HepG2 (cell line): ENCODE measurements at regions of chr7 and their contacts with region 1.

Region 1: DNA sequence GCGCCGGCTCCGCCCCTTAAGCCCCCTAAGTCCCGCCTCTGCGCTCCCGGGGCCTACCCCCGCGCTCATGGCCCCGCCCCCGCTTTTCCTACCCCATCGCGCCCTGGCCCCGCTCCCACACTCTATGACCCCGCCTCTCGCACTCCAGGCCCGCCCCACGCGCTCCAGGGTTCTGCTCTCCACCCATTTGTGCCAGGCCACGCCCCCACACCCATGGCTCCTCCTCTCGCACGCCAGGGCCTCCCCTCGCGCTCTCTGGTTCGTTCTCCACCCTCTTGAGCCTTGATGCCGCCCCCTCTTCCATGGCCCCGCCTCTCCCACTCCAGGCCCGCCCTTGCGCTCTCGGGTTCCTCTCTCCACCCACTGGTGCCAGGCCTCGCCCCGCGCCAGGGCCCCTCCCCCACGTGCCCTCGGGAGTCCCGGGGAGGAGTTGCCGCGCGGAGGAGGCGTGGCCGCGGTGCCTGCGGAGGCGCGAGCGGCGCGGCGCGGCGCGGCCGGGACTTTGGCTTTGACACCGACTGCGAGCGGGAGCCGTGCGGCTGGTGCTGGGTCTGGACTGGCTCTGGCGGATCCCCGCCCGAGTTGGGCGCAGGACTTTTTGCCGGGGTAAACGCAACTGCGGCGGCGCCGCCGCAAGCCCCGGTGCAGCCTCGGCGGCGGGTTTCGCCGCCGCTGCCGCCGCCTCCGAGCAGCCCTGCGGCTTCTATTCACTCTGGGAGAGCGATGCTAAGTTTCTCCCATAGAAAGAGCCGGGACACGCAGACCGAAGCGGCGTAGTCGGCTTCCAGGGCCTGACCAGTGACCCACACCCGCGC is at the start of gene EEPD1:
- DNase-seq: peak; percentile 96
- ATAC-seq: peak; percentile 86
- H3K4me3 ChIP-seq: peak within 1 kb of the TSS; percentile 82 to 91 (median 89)
- H3K27ac ChIP-seq: peak within 1 kb of the TSS; percentile 82
- H3K4me1 ChIP-seq: peaks cover 67% of the 10 kb centered on the region
- H3K27me3 ChIP-seq: 0 out of 5 replicates have a peak, but pooled peaks cover 0 to 2% of the 10 kb centered on the region in 2 experiments
- CTCF ChIP-seq: no peak
- EP300 ChIP-seq: peak in 1 of 2 experiments; percentile 21; a peak in 1 of 4 replicates
- POLR2A ChIP-seq: peak; percentile 78 to 93
- RAD21 ChIP-seq: peak; percentile 65
- total RNA-seq, gene EEPD1: 10.0 and 10.1 TPM in 2 replicates

Region 2: GRCh38 chr7:35985126-35985754 is 167.7 kb before region 1 on chr7:
- CTCF ChIA-PET with region 1: no interaction called
- POLR2A ChIA-PET with region 1: no interaction called
- in situ Hi-C with region 1: loop called (anchors 5 kb)
- intact Hi-C with region 1: no loop called
- DNase-seq: peak; percentile 52
- ATAC-seq: peak; percentile 99
- H3K4me3 ChIP-seq: no peak overlapping the region
- H3K27ac ChIP-seq: no peak overlapping the region
- H3K4me1 ChIP-seq: peaks cover 14% of the 10 kb centered on the region; the same call in 1 of the 2 replicates
- H3K27me3 ChIP-seq: peaks cover 0 to 10% of the 10 kb centered on the region in 2 experiments; a peak in 2 of 5 replicates
- CTCF ChIP-seq: peak; percentile 95
- EP300 ChIP-seq: no peak
- POLR2A ChIP-seq: no peak
- RAD21 ChIP-seq: peak; percentile 95

Region 3: DNA sequence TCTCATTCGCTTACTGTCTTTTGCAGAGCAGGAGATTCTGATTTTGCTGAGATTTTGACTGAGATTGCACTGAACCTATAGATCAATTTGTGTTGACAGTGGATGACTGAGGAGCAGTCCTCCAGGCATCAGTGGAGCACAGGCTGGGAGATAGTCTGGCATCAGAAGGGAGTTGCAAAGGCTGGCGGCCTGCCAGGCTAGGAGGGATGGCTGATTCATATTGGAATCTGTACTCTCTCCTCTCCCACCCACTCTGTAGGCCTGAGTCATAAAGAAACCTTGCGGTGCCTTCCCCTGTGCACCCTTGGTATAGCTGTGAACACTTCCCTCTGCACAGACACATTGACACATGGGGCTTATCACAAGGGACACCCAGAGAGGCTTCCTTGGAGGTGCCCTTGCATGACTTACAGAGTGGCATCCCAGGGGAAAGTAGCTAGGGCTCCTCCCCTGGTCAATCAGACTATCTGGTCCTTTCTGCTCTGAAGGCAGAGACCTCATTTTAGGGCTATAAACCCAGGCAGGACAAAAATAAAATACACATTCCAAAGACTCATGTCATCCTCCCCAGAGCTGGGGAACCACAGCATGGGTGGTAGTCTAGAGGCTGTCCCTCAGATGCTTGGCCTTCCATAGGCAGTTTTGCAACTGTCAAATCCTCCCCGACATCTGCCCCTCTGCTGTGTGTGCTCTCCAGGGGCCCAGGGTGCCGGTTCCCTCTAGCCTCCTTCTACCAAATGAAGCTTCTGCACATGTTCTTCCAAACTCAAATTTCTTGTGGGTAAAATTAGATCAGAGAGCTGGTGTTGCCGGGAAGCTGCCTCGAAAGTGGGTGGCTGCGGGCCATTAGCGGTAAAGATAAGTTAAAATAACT is 37.3 kb before region 1 on chr7:
- CTCF ChIA-PET with region 1: no interaction called
- POLR2A ChIA-PET with region 1: interaction called, 3 read pairs
- in situ Hi-C with region 1: no loop called
- intact Hi-C with region 1: loop called (anchors 5 kb)
- DNase-seq: peak; percentile 82
- ATAC-seq: peak; percentile 86
- H3K4me3 ChIP-seq: no peak overlapping the region
- H3K27ac ChIP-seq: no peak overlapping the region
- H3K4me1 ChIP-seq: peaks cover 57% of the 10 kb centered on the region
- H3K27me3 ChIP-seq: no peaks in the 10 kb centered on the region
- CTCF ChIP-seq: no peak
- EP300 ChIP-seq: no peak
- POLR2A ChIP-seq: no peak
- RAD21 ChIP-seq: no peak

Region 4: DNA sequence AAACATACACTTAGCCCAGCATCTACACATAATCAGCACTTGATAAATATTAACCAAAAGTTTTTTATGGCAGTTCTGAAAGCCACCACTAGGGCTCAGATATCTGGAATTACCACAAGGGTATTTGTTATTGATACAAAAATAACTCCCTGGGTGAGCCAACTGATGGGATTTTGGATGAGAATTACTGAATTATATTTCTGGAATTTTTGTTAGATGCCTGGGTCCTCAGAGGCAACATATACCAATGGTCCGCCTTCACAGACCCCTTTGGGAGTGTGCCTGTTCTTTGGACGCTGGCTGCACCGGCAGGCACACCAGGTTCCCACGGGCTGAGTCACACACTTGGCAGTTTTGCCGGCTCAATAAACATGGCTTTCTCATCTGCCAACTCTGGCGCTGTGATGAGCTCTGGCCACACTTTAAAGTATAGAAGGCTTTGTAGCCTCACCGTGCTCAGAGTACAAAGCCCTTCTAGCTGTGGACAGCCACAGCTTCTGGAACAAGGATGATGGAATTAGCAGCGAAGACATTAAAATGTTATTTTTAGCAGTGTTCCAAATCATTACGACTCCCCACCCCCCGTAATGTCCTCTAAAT is 24.4 kb before region 1 on chr7:
- CTCF ChIA-PET with region 1: no interaction called
- POLR2A ChIA-PET with region 1: interaction called, 3 read pairs
- in situ Hi-C with region 1: no loop called
- intact Hi-C with region 1: loop called (anchors 2 kb)
- DNase-seq: peak; percentile 76
- ATAC-seq: peak; percentile 92
- H3K4me3 ChIP-seq: peak overlapping the region; percentile 14 to 42 (median 16); a peak in 3 of 6 replicates
- H3K27ac ChIP-seq: no peak overlapping the region
- H3K4me1 ChIP-seq: peaks cover 36% of the 10 kb centered on the region
- H3K27me3 ChIP-seq: peaks cover 1 to 11% of the 10 kb centered on the region in 2 experiments; a peak in 3 of 5 replicates
- CTCF ChIP-seq: peak; percentile 18; the same call in 1 of the 2 replicates
- EP300 ChIP-seq: no peak
- POLR2A ChIP-seq: no peak
- RAD21 ChIP-seq: no peak

Region 5: DNA sequence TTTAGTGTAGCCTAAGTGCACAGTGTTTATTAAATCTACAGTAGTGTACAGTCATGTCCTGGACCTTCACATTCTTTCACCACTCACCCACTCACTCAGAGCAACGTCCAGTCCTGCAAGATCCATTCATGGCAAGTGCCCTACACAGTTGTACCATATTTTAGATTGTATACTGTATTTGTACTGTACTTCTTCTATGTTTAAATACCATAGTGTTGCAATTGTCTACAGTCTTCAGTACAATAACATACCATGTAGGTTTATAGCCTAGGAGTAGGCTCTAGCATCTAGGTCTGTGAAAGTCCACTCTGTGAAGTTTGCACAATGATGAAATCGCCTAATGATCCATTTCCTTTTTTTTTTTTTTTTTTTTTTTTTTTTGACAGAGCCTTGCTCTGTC is 12.1 kb after region 1 on chr7:
- CTCF ChIA-PET with region 1: no interaction called
- POLR2A ChIA-PET with region 1: interaction called, 4 read pairs
- in situ Hi-C with region 1: no loop called
- intact Hi-C with region 1: loop called (anchors 1 kb)
- DNase-seq: peak; percentile 96
- ATAC-seq: peak; percentile 99
- H3K4me3 ChIP-seq: no peak overlapping the region
- H3K27ac ChIP-seq: peak overlapping the region; percentile 62
- H3K4me1 ChIP-seq: peaks cover 60% of the 10 kb centered on the region
- H3K27me3 ChIP-seq: no peaks in the 10 kb centered on the region
- CTCF ChIP-seq: no peak
- EP300 ChIP-seq: peak in 1 of 2 experiments; percentile 72; a peak in 2 of 4 replicates
- POLR2A ChIP-seq: no peak
- RAD21 ChIP-seq: no peak

Region 6: GRCh38 chr7:36198854-36199266 is 45.9 kb after region 1 on chr7:
- CTCF ChIA-PET with region 1: no interaction called
- POLR2A ChIA-PET with region 1: no interaction called
- in situ Hi-C with region 1: no loop called
- intact Hi-C with region 1: loop called (anchors 5 kb)
- DNase-seq: no peak
- ATAC-seq: no peak
- H3K4me3 ChIP-seq: no peak overlapping the region
- H3K27ac ChIP-seq: no peak overlapping the region
- H3K4me1 ChIP-seq: peaks cover 43% of the 10 kb centered on the region
- H3K27me3 ChIP-seq: no peaks in the 10 kb centered on the region
- CTCF ChIP-seq: no peak
- EP300 ChIP-seq: no peak
- POLR2A ChIP-seq: no peak
- RAD21 ChIP-seq: no peak

Region 7: DNA sequence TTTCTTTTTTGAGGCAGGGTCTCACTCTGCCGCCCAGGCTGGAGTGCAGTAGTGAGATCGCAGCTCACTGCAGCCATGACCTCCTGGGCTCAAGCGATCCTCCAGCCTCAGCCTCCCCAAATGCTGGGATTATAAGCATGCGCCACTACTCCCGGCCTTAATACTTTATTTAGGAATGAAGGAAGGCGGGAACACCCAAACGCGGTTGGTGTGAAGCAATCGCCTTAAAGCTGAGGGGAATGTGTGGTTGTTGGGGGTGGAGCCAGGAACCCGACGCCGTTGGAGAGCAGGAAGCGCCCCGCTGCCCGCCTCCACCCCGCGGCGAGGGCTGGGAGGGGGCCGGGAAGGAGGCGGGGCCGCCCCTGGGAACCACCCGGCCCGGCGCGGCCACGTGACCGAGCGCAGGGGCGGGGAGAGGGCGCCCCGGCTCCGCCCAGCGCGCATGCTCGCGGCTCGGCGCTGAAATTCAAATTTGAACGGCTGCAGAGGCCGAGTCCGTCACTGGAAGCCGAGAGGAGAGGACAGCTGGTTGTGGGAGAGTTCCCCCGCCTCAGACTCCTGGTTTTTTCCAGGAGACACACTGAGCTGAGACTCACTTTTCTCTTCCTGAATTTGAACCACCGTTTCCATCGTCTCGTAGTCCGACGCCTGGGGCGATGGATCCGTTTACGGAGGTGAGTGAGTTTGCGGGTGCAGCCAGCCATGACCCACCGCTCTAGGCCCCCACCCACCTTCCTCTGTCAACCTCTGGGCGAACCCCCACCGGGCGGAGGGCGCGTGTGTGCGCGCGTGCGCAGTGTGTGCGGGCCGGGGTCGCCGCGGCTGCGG is 236.6 kb after region 1 on chr7 and contains the start of gene ANLN:
- CTCF ChIA-PET with region 1: no interaction called
- POLR2A ChIA-PET with region 1: no interaction called
- in situ Hi-C with region 1: no loop called
- intact Hi-C with region 1: loop called (anchors 5 kb)
- DNase-seq: peak; percentile 92
- ATAC-seq: peak; percentile 83
- H3K4me3 ChIP-seq: peak within 1 kb of the TSS; percentile 93 to 97 (median 97)
- H3K27ac ChIP-seq: peak within 1 kb of the TSS; percentile 89
- H3K4me1 ChIP-seq: peaks cover 45% of the 10 kb centered on the region
- H3K27me3 ChIP-seq: no peaks in the 10 kb centered on the region; a peak in 1 of 5 replicates
- CTCF ChIP-seq: no peak
- EP300 ChIP-seq: peak in 1 of 2 experiments; percentile 11; a peak in 1 of 4 replicates
- POLR2A ChIP-seq: peak; percentile 71 to 96
- RAD21 ChIP-seq: no peak; the same call in 1 of the 2 replicates
- total RNA-seq, gene ANLN: 38.8 and 72.0 TPM in 2 replicates